ENCODE measurements at regions of chr18 and their contacts with region 1.

Region 1: GRCh38 chr18:34509879-34510586 is 200.1 kb upstream of the DTNA start:
- DNase-seq: no peak
- H3K4me3 ChIP-seq: no peak overlapping the region
- H3K27ac ChIP-seq: no peak overlapping the region
- H3K4me1 ChIP-seq: peaks cover 10% of the 10 kb centered on the region
- H3K27me3 ChIP-seq: no peaks in the 10 kb centered on the region
- CTCF ChIP-seq: no peak
- POLR2A ChIP-seq: no peak

Region 2: DNA sequence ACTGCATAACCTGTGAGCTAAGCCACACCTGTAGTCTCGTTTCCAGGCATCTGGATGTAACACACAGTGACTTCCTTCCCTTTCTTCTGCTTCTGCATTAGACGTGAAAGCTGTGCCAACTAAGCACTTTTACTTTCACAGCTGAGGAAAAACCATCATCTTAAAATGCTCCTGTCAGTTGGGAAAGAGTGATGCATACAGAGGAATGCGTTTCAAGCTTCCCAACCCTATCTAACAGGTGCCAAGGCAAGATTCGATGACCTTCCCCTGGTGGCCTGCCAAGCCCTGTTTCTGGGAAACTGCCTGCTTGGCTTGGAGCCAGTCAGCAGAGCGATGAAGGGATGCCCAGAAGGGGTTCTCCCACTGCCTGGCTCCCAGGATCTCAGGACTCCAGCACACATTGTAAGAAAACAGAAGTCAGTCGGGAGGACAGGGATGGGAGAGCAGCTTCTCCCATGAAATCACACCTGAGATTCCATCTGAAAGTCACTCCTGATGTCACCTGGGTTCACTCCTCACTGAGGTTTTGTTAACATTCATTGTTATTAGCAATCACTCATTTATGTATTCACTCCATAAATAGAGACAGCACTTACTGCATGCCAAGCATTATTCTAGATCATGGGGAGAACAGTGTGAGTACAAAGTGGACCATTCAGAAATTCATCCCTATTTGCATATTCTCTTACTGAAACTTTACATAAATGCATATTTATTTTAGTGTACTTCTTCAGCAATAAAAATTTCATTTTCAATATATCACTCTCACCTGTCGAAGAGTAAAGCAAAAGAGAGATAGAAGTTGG is 264.1 kb after region 1 on chr18:
- CTCF ChIA-PET with region 1: no interaction called
- POLR2A ChIA-PET with region 1: no interaction called
- dilution Hi-C with region 1: no loop called
- intact Hi-C with region 1: loop called (anchors 5 kb)
- DNase-seq: peak; percentile 83
- H3K4me3 ChIP-seq: no peak overlapping the region
- H3K27ac ChIP-seq: peak overlapping the region; percentile 57
- H3K4me1 ChIP-seq: peaks cover 22% of the 10 kb centered on the region
- H3K27me3 ChIP-seq: no peaks in the 10 kb centered on the region
- CTCF ChIP-seq: no peak
- POLR2A ChIP-seq: no peak

Measured in endothelial cell of umbilical vein (primary cell).